ENCODE measurements at regions of chr17 and their contacts with region 1.

Region 1: GRCh38 chr17:67800495-67800928 is 24.8 kb upstream of the BPTF start:
- DNase-seq: peak; percentile 91
- ATAC-seq: peak; percentile 98
- H3K4me3 ChIP-seq: no peak overlapping the region
- H3K27ac ChIP-seq: no peak overlapping the region
- H3K4me1 ChIP-seq: no peaks in the 10 kb centered on the region
- H3K27me3 ChIP-seq: no peaks in the 10 kb centered on the region
- CTCF ChIP-seq: peak; percentile 92

Region 2: GRCh38 chr17:67221062-67221998 is 579.2 kb before region 1 on chr17:
- CTCF ChIA-PET with region 1: interaction called, 10 read pairs
- POLR2A ChIA-PET with region 1: no interaction called
- intact Hi-C with region 1: no loop called
- DNase-seq: peak; percentile 54
- ATAC-seq: peak; percentile 66
- H3K4me3 ChIP-seq: no peak overlapping the region
- H3K27ac ChIP-seq: no peak overlapping the region
- H3K4me1 ChIP-seq: peaks cover 9% of the 10 kb centered on the region
- H3K27me3 ChIP-seq: no peaks in the 10 kb centered on the region
- CTCF ChIP-seq: peak; percentile 69

Region 3: GRCh38 chr17:67824735-67825626 is 24.5 kb after region 1 on chr17 and contains the start of gene BPTF:
- CTCF ChIA-PET with region 1: interaction called, 10 read pairs
- POLR2A ChIA-PET with region 1: interaction called, 6 read pairs
- intact Hi-C with region 1: loop called (anchors 1 kb)
- DNase-seq: peak; percentile 98
- ATAC-seq: peak; percentile 90
- H3K4me3 ChIP-seq: peak within 1 kb of the TSS; percentile 90
- H3K27ac ChIP-seq: peak within 1 kb of the TSS; percentile 81
- H3K4me1 ChIP-seq: peaks cover 25% of the 10 kb centered on the region
- H3K27me3 ChIP-seq: no peaks in the 10 kb centered on the region
- CTCF ChIP-seq: peak; percentile 89
- total RNA-seq, gene BPTF: 53.8 and 61.8 TPM in 2 replicates

Region 4: DNA sequence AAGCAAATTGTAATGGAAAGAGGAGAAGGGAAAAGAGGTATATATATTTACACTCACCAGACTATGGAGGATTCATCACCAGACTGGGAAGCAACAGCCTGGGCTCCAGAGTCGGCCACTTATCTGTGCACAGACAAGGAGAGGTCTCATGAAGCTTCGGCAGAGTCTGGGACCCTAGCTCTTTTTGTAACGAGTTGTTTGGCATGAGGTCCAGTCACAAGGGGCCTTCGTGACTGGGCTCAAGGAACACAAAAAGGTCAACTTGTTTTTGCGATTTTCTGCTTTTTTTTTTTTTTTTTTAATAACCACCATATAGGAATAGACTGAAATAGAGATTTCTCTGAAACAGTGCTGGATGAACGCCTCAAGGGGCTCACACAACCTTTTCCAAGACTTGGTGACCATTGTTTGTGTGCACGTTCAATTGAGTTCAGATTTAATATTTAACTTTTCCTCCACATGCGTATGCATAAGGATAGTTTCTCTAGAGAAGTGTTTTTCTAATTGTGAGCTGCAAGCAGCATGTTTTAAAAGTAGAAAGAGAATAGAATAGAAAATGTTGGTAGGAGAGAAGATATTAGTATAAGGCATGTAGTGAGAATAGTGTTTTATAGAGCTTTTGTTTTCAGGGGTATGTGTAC is 50.6 kb after region 1 on chr17:
- CTCF ChIA-PET with region 1: no interaction called
- POLR2A ChIA-PET with region 1: interaction called, 10 read pairs
- intact Hi-C with region 1: no loop called
- DNase-seq: no peak
- ATAC-seq: no peak
- H3K4me3 ChIP-seq: no peak overlapping the region
- H3K27ac ChIP-seq: no peak overlapping the region
- H3K4me1 ChIP-seq: peaks cover 12% of the 10 kb centered on the region
- H3K27me3 ChIP-seq: no peaks in the 10 kb centered on the region
- CTCF ChIP-seq: no peak

Region 5: GRCh38 chr17:67862614-67863217 is 62.2 kb after region 1 on chr17:
- CTCF ChIA-PET with region 1: interaction called, 13 read pairs
- POLR2A ChIA-PET with region 1: no interaction called
- intact Hi-C with region 1: loop called (anchors 2 kb)
- DNase-seq: peak; percentile 21
- ATAC-seq: 0 out of 2 replicates have a peak, but pooled peaks have one; percentile 17
- H3K4me3 ChIP-seq: no peak overlapping the region
- H3K27ac ChIP-seq: no peak overlapping the region
- H3K4me1 ChIP-seq: peaks cover 7% of the 10 kb centered on the region; the same call in 1 of the 2 replicates
- H3K27me3 ChIP-seq: no peaks in the 10 kb centered on the region
- CTCF ChIP-seq: peak; percentile 56

Region 6: DNA sequence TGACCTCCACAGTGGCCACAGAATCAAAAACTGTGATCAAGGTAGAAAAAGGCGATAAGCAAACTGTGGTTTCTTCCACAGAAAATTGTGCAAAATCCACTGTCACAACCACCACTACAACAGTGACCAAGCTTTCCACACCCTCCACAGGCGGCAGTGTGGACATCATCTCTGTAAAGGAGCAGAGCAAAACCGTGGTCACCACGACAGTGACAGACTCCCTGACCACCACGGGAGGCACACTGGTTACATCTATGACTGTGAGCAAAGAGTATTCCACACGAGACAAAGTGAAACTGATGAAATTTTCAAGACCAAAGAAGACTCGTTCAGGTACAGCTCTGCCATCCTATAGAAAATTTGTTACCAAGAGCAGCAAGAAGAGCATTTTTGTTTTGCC is 112.1 kb after region 1 on chr17:
- CTCF ChIA-PET with region 1: no interaction called
- POLR2A ChIA-PET with region 1: no interaction called
- intact Hi-C with region 1: loop called (anchors 5 kb)
- DNase-seq: no peak
- ATAC-seq: no peak
- H3K4me3 ChIP-seq: no peak overlapping the region
- H3K27ac ChIP-seq: no peak overlapping the region
- H3K4me1 ChIP-seq: no peaks in the 10 kb centered on the region
- H3K27me3 ChIP-seq: no peaks in the 10 kb centered on the region
- CTCF ChIP-seq: no peak

Measured in PC-3 (cell line).